Activated CD8-positive, alpha-beta T cell treated with anti-CD3 and anti-CD28 coated beads for 36 hours (primary cell): ENCODE measurements at regions of chr11 and their contacts with region 1.

Region 1: DNA sequence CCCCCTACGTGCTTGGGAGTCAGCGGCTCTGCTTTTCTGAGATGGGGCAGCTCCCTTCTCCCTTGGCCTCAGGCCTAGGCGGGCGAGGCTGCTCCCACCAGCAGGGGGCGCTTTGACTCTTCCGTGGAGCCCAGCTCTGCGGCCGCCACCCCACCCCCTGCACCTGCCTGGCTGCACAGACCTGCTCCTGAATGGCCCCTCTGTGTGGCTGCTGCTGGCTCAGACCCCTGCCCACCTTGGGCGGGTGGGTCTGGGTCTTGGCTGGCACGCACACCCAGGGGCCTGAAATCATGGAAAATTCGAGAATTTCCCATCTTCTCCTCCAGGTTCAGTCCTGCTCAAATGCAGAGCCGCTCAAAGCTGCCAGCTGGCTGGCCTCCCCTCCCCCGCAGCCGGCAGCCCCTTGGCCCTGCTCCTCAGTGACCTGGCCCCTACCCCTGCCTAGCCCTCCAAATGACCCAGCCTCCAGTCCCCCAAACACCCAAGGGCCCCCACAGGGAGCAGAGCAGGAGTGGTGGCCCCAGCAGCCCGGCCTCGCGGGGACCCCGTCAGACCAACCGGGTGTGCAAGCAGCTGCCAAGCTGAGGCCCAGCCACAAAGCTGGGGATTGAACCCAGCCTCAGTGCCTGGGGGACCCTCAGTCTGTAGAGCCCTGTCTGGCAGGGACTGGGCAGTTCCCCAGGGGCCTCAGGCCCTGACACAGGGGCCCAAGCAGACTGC is 9.0 kb downstream of the PRR33 start:
- DNase-seq: peak; percentile 87
- ATAC-seq: peak; percentile 89
- H3K4me3 Mint-ChIP-seq: no peak overlapping the region
- H3K27ac Mint-ChIP-seq: no peak overlapping the region
- H3K4me1 Mint-ChIP-seq: peaks cover 5% of the 10 kb centered on the region
- H3K27me3 Mint-ChIP-seq: no peaks in the 10 kb centered on the region
- CTCF ChIP-seq: peak; percentile 78

Region 2: GRCh38 chr11:1832211-1832919 is 50.3 kb before region 1 on chr11:
- CTCF ChIA-PET with region 1: interaction called, 25 read pairs
- POLR2A ChIA-PET with region 1: interaction called, 3 read pairs
- intact Hi-C with region 1: loop called (anchors 5 kb)
- DNase-seq: peak; percentile 70
- ATAC-seq: peak; percentile 79
- H3K4me3 Mint-ChIP-seq: no peak overlapping the region
- H3K27ac Mint-ChIP-seq: no peak overlapping the region
- H3K4me1 Mint-ChIP-seq: no peaks in the 10 kb centered on the region
- H3K27me3 Mint-ChIP-seq: no peaks in the 10 kb centered on the region
- CTCF ChIP-seq: peak; percentile 97

Region 3: GRCh38 chr11:1845561-1846452 is 36.9 kb before region 1 on chr11:
- CTCF ChIA-PET with region 1: interaction called, 32 read pairs
- POLR2A ChIA-PET with region 1: interaction called, 81 read pairs
- intact Hi-C with region 1: no loop called
- DNase-seq: peak; percentile 48
- ATAC-seq: peak; percentile 47
- H3K4me3 Mint-ChIP-seq: peak overlapping the region; percentile 57
- H3K27ac Mint-ChIP-seq: peak overlapping the region; percentile 91
- H3K4me1 Mint-ChIP-seq: peaks cover 60% of the 10 kb centered on the region
- H3K27me3 Mint-ChIP-seq: no peaks in the 10 kb centered on the region
- CTCF ChIP-seq: no peak

Region 4: DNA sequence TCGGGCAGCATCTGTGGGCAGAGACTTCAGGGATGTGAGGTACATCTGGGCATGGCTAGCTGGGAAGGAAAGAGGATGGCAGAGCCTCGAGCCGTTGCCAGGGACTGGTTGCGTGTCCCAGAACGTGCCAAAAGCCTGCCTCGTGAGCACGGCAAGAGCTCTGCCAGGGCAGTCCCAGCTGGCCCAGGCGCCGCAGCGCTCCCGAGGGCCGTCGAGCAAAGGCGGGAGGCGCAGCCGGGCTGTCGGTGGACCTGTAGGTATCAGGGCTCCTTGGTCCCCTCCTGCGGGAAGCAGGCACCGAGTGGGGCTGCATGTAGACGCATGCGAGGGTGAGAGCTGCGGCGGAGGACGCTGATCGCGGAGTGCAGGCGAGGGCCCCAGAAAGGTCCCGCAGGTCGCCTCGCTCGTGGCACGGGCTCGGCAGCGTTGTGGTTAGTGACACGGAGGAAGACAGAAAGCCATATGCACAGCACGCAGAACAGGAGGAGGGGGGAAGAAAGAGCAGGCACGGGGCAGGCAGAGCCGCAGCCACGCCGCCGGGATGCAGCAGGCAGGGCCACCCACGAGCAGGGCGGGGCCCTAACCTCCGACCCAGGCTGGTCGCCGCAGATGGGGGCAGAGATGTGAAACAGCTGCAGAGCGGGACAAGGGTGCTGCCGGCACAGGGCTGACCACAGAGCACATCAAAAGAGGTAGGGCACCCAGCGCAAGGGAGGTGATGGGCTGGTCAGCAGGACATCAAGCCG is 11.8 kb before region 1 on chr11:
- CTCF ChIA-PET with region 1: interaction called, 34 read pairs
- POLR2A ChIA-PET with region 1: interaction called, 3 read pairs
- intact Hi-C with region 1: no loop called
- DNase-seq: peak; percentile 61
- ATAC-seq: peak; percentile 79
- H3K4me3 Mint-ChIP-seq: peak overlapping the region; percentile 9
- H3K27ac Mint-ChIP-seq: peak overlapping the region; percentile 22
- H3K4me1 Mint-ChIP-seq: peaks cover 51% of the 10 kb centered on the region
- H3K27me3 Mint-ChIP-seq: no peaks in the 10 kb centered on the region
- CTCF ChIP-seq: no peak

Region 5: DNA sequence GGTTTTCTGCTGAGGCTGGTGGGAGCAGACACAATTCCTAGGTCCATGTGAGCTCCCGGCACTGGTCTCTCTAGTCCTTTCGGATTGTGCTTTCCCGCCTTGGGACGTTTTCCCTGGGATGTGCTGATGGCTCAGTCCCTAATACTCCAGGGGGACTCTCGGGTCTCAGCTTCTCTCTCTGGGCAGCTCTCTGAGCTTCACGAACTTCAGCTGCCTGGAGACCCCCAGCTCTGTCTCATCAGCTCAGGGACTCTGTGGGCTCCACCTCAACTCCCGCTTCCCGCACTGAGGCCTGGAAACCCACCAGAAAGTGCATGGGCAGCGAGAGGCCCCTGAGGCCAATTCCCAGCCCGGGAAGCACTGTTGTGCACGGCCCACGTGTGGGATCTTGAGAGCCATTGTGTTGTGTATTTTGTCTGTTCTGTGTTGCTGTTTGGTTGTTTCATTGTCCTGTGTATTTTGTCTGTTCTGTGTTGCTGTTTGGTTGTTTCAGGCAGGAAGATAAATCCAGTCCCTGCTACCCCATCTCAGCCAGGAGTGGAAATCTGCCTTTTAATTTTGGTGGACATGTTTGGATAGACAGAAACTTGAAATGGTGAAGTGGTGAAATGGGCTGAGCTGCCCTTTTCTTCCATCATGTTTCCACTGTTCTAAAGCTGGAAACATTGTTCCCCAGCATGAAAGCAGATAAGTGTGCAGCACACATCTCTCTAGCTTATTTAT is 24.2 kb after region 1 on chr11:
- CTCF ChIA-PET with region 1: interaction called, 12 read pairs
- POLR2A ChIA-PET with region 1: no interaction called
- intact Hi-C with region 1: no loop called
- DNase-seq: no peak
- ATAC-seq: no peak
- H3K4me3 Mint-ChIP-seq: no peak overlapping the region
- H3K27ac Mint-ChIP-seq: no peak overlapping the region
- H3K4me1 Mint-ChIP-seq: no peaks in the 10 kb centered on the region
- H3K27me3 Mint-ChIP-seq: peaks cover 3% of the 10 kb centered on the region
- CTCF ChIP-seq: no peak

Region 6: GRCh38 chr11:1946812-1947484 is 64.3 kb after region 1 on chr11 and contains the start of gene MRPL23:
- CTCF ChIA-PET with region 1: interaction called, 15 read pairs
- POLR2A ChIA-PET with region 1: interaction called, 3 read pairs
- intact Hi-C with region 1: no loop called
- DNase-seq: peak; percentile 29
- ATAC-seq: peak; percentile 88
- H3K4me3 Mint-ChIP-seq: no peak within 1 kb of the TSS
- H3K27ac Mint-ChIP-seq: no peak within 1 kb of the TSS
- H3K4me1 Mint-ChIP-seq: no peaks in the 10 kb centered on the region
- H3K27me3 Mint-ChIP-seq: no peaks in the 10 kb centered on the region
- CTCF ChIP-seq: no peak
- total RNA-seq, gene MRPL23: 134 to 145 TPM

Region 7: GRCh38 chr11:2166091-2166851 is 283.6 kb after region 1 on chr11:
- CTCF ChIA-PET with region 1: no interaction called
- POLR2A ChIA-PET with region 1: no interaction called
- intact Hi-C with region 1: no loop called
- DNase-seq: peak; percentile 59
- ATAC-seq: peak; percentile 81
- H3K4me3 Mint-ChIP-seq: no peak overlapping the region
- H3K27ac Mint-ChIP-seq: no peak overlapping the region
- H3K4me1 Mint-ChIP-seq: no peaks in the 10 kb centered on the region
- H3K27me3 Mint-ChIP-seq: peaks cover 5% of the 10 kb centered on the region
- CTCF ChIP-seq: peak; percentile 77